Activated CD4-positive, alpha-beta T cell treated with anti-CD3 and anti-CD28 coated beads, Interleukin-2, amount 10 ng/mL, durations not matched to agents 24 days and 14 days (primary cell): ENCODE measurements at regions of chr15 and their contacts with region 1.

Region 1: GRCh38 chr15:89358755-89359439 is 24.3 kb upstream of the POLG start:
- DNase-seq: peak; percentile 96
- H3K4me3 Mint-ChIP-seq: peak overlapping the region; percentile 86
- H3K27ac Mint-ChIP-seq: peak overlapping the region; percentile 37
- H3K4me1 Mint-ChIP-seq: peaks cover 3% of the 10 kb centered on the region
- H3K27me3 Mint-ChIP-seq: peaks cover 73% of the 10 kb centered on the region

Region 2: GRCh38 chr15:89375093-89376005 is 16.5 kb after region 1 on chr15:
- intact Hi-C with region 1: loop called (anchors 2 kb)
- DNase-seq: no peak
- H3K4me3 Mint-ChIP-seq: no peak overlapping the region
- H3K27ac Mint-ChIP-seq: no peak overlapping the region
- H3K4me1 Mint-ChIP-seq: no peaks in the 10 kb centered on the region
- H3K27me3 Mint-ChIP-seq: peaks cover 76% of the 10 kb centered on the region

Region 3: DNA sequence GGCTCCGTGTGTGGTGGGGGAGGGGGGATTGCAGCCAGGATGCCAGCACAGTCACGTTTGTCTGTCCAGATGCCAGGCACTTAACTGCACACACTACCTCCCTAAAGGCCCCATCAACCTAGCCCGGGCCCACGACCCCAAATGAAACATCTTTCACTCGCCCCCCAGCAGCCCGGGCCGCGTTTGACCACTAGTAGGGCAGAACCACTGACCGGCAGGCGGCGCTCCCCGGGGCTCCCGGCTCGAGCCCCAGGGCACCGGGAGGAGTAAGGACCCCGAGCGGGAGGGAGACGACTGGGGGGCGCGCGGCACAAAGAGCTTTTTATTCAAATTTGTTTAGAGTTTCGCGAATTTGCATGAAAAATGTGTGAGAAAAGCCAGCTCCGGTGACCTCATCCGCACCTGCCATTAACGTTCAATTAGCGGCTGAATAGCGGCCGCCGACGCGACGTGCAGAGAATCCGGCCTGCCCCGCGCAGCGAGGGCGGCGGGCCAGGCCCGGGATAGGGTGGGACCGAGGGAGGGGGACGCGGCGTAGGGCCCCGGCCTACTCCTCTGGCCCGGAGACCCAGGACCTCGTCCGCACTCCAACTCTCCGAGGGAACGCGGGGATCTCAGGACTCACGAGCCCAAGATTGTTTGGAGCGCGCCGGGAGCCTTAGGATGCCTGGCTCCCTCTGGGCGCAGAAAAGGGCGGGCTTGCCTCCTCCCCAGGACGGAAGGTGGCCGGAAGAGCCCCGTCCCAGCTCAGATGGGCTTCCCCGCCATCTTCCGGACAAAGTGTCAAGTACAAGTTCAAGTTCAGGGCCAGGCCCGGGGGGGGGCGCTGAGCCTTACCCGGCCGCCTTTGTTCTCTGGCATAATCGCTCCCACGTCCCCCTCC is 40.6 kb after region 1 on chr15:
- intact Hi-C with region 1: loop called (anchors 2 kb)
- DNase-seq: peak; percentile 79
- H3K4me3 Mint-ChIP-seq: peak overlapping the region; percentile 78
- H3K27ac Mint-ChIP-seq: peak overlapping the region; percentile 41
- H3K4me1 Mint-ChIP-seq: peaks cover 14% of the 10 kb centered on the region
- H3K27me3 Mint-ChIP-seq: peaks cover 69% of the 10 kb centered on the region

Region 4: DNA sequence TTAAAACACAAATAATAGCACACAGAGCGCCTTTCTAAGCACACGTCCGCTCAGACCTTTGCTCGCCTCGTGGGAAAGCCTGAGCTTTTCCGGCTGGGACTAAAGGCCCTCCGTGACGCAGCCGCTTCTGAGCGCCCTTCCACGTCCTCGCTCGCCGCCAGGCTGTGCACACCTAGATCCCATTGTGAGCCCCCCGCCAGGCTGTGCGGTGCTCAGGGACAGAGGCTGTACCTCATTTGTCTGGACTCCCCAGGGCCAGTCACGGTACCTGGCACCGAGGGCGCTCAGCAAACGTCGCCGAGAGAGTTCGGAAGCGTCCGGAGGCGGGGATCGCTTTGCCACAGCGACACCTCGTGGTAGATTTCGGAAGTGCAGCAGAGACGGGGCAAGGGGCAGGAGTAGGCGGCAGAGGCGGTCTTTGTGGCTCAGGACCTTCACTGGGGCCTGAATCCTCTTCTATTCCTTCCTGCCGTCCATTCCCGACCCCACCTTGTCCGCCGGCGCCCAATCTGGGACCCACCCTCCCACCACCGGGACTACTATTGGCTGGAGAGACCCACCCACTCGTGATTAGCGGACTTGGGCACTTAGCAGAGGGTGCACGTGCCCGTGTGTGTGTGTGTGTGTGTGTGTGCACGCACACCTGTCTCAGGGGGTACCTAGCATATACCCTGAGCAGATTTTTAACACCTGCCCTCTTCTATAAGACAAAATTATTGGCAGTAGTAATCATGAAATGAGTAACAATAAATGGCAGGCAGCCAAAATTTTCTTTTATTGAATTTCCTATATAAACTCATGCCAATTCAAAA is 71.8 kb after region 1 on chr15:
- intact Hi-C with region 1: loop called (anchors 1 kb)
- DNase-seq: peak; percentile 97
- H3K4me3 Mint-ChIP-seq: peak overlapping the region; percentile 84
- H3K27ac Mint-ChIP-seq: no peak overlapping the region
- H3K4me1 Mint-ChIP-seq: peaks cover 4% of the 10 kb centered on the region
- H3K27me3 Mint-ChIP-seq: peaks cover 31% of the 10 kb centered on the region

Region 5: DNA sequence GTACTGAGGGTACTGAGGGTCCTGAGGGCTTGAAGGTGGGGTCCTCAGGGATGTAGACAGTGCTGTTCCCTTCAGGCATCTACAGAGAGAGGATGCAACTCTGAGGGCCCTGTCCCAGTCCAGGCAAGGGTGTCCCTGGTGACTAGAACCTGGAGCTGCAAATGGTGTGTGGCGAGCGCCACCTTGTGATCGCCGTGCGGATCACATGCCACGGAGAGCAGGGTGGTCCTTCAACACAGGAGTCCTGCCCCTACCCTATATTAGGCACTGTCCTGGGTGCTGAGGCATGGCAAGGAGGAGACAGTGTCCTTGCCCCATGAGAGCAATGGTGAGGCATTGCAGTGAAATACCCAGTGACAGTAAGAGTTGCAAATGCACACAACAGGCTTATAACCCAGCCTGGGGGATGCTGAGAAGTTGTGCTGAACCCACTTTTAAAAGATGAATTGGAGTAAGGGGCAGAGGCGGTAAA is 113.9 kb after region 1 on chr15:
- intact Hi-C with region 1: loop called (anchors 1 kb)
- DNase-seq: peak; percentile 84
- H3K4me3 Mint-ChIP-seq: no peak overlapping the region
- H3K27ac Mint-ChIP-seq: no peak overlapping the region
- H3K4me1 Mint-ChIP-seq: no peaks in the 10 kb centered on the region
- H3K27me3 Mint-ChIP-seq: peaks cover 20% of the 10 kb centered on the region